ENCODE measurements at regions of chr19 and their contacts with region 1.

Region 1: DNA sequence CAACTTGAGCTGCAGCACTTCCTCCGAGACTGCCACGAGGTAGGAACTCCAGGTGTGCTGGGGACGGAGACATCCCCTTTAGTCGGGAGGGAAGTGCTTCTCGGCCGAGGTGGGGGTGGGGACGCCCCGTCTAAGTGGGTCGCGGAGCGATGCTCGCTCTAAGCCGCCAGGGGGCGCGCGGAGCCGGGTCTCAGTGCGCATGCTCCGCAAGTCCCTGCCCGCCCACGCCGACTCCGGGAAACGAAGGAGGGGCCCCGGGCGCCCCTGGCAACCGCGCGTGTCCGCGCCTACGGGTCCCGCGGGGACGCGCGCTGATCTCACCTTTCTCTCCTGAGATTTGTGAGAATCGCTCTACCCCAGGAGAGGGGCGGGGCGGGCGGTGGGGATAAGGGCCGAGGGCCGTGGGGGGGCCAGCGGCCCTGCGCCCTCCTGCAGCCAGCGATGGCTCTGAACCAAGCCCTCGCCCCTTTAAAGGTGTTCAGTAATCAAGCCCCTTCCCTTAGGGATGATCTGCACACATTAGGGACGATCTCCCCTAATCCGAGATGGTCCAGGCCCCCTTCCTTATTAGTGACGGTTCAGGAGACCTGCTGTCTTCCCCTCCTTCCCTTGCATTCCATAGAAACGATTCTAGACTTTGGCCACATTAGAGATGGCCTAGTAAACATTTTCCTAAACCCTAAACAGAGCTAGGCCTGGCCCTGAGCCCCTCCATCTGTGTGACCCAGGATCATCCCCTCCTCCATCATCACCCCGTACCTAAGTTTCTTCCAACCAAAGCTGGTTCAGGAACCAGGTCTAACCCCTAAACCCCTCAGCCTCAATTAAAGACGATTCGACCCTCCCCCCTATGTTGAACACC is 47.3 kb upstream of the SHKBP1 start:
- DNase-seq: peak; percentile 97
- H3K4me3 Mint-ChIP-seq: peak overlapping the region; percentile 73
- H3K27ac Mint-ChIP-seq: peak overlapping the region; percentile 53
- H3K4me1 Mint-ChIP-seq: peaks cover 16% of the 10 kb centered on the region
- H3K27me3 Mint-ChIP-seq: peaks cover 32% of the 10 kb centered on the region

Region 2: GRCh38 chr19:40305403-40305802 is 223.9 kb before region 1 on chr19:
- intact Hi-C with region 1: loop called (anchors 10 kb)
- DNase-seq: peak; percentile 92
- H3K4me3 Mint-ChIP-seq: no peak overlapping the region
- H3K27ac Mint-ChIP-seq: no peak overlapping the region
- H3K4me1 Mint-ChIP-seq: peaks cover 3% of the 10 kb centered on the region
- H3K27me3 Mint-ChIP-seq: peaks cover 1% of the 10 kb centered on the region

Region 3: DNA sequence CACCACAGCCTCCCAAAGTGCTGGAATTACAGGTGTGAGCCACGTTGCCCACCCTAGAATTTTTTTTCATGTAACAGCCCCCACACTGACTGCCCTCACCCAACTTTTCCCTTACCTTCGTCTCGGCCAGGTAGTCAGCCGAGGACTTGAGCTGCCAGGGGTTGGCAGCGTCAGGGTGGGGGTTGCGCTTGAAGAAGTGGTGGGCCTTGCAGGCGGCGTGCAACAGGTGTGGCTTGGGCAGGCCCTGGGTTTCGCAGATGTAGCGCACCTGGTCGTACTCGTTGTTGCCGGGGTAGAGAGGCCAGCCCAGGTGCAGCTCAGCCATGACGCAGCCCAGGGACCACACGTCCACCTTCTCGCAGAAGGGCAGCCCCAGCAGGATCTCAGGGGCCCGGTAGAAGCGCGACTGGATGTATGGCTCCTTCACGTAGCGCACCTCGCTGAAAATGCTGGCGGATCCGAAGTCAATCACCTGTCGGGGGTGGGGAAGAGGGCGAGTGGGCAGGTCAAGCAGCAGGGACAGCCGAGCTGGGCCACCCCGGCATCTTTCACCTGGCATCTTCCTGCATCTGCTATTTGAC is 145.6 kb before region 1 on chr19:
- intact Hi-C with region 1: no loop called
- DNase-seq: no peak
- H3K4me3 Mint-ChIP-seq: no peak overlapping the region
- H3K27ac Mint-ChIP-seq: no peak overlapping the region
- H3K4me1 Mint-ChIP-seq: no peaks in the 10 kb centered on the region
- H3K27me3 Mint-ChIP-seq: peaks cover 2% of the 10 kb centered on the region

Region 4: GRCh38 chr19:40425450-40426287 is 103.7 kb before region 1 on chr19 and contains the start of gene SERTAD1:
- intact Hi-C with region 1: loop called (anchors 5 kb)
- DNase-seq: peak; percentile 100
- H3K4me3 Mint-ChIP-seq: peak within 1 kb of the TSS; percentile 92
- H3K27ac Mint-ChIP-seq: peak within 1 kb of the TSS; percentile 91
- H3K4me1 Mint-ChIP-seq: peaks cover 26% of the 10 kb centered on the region
- H3K27me3 Mint-ChIP-seq: peaks cover 5% of the 10 kb centered on the region
- total RNA-seq, gene SERTAD1: 19.3 and 20.8 TPM in 2 replicates

Region 5: GRCh38 chr19:40465557-40466150 is 63.7 kb before region 1 on chr19 and contains the start of gene BLVRB:
- intact Hi-C with region 1: loop called (anchors 5 kb)
- DNase-seq: peak; percentile 100
- H3K4me3 Mint-ChIP-seq: peak within 1 kb of the TSS; percentile 96
- H3K27ac Mint-ChIP-seq: peak within 1 kb of the TSS; percentile 87
- H3K4me1 Mint-ChIP-seq: peaks cover 24% of the 10 kb centered on the region
- H3K27me3 Mint-ChIP-seq: peaks cover 23% of the 10 kb centered on the region
- total RNA-seq, gene BLVRB: 7.5 and 10.6 TPM in 2 replicates

Region 6: DNA sequence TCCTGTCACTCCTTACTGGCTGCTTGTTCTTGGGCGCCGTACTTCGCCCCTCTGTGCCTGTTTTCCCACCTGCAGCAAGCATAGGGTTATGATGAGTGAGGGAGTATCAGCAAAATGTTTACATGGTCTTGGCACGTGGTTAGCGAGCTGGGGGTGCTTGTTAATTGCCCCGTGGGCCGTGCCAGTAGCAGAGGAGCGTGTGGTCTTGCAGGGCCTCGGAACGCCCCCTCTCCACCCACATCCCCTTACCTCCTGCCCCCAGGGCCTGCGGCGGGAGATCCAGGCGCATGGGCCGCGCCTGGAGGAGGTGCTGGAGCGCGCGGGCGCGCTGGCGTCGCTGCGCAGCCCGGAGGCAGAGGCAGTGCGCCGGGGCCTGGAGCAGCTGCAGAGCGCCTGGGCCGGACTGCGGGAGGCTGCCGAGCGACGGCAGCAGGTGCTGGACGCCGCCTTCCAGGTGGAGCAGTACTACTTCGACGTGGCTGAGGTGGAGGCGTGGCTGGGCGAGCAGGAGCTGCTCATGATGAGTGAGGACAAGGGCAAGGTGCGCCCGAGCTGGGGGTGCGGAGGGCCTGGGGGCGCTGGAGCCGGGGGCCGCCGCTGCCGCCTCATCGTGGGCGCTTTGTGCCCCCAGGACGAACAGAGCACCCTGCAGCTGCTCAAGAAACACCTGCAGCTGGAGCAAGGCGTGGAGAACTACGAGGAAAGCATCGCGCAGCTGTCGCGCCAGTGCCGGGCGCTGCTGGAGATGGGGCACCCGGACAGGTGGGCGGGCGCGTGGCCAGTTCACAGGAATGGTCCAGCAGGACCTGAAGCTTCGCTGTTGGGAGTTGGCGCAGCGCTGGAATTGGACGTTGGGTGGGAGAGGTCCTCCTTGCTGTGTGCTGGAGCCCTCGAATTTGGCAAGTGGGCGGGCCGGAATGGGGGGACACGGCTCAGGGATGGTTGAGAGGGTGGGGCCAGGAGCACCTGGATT is 24.8 kb after region 1 on chr19:
- intact Hi-C with region 1: no loop called
- DNase-seq: no peak
- H3K4me3 Mint-ChIP-seq: no peak overlapping the region
- H3K27ac Mint-ChIP-seq: no peak overlapping the region
- H3K4me1 Mint-ChIP-seq: peaks cover 5% of the 10 kb centered on the region
- H3K27me3 Mint-ChIP-seq: peaks cover 44% of the 10 kb centered on the region

Region 7: GRCh38 chr19:40570313-40571004 is 41.1 kb after region 1 on chr19:
- intact Hi-C with region 1: loop called (anchors 2 kb)
- DNase-seq: peak; percentile 99
- H3K4me3 Mint-ChIP-seq: peak overlapping the region; percentile 63
- H3K27ac Mint-ChIP-seq: peak overlapping the region; percentile 60
- H3K4me1 Mint-ChIP-seq: peaks cover 9% of the 10 kb centered on the region
- H3K27me3 Mint-ChIP-seq: peaks cover 32% of the 10 kb centered on the region

Region 8: DNA sequence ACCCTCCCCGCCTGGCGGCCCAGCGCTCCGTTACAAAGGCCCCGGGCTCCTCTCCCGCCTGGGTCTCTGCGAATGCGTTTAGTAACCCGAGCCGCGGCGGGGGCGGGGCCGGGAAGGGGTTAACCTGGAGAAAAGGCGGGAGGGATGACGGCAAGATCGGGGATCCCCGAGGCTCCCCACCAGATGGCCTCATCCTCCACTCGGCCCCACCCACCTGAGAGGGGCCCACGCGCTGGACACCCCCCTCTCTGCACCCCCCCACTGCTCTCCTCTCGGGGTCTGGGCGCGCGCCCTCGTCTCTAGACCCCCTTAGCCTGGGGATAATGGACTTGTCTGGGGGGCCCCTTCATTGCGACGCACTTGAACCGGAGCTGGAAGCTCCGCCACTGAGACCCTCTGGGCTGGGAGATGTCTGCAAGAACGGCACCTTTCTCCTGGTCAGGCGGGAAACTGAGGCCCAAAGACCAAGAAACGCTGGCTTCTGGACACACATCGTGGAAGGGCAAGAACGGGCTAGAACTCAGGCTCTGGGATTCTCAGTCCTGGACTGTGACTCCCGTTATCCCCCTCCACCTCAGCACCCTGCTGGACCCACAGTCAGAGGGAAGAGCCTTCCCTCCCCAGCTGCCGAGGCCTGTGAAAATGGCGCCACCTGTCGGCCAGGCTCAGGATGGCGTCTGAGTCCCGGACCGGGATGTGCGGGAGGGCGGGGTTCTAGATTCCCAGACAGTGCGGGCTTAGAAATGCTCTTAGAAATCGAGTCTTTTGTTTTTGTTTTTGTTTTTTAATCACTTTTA is 69.0 kb after region 1 on chr19:
- intact Hi-C with region 1: loop called (anchors 2 kb)
- DNase-seq: peak; percentile 96
- H3K4me3 Mint-ChIP-seq: peak overlapping the region; percentile 55
- H3K27ac Mint-ChIP-seq: no peak overlapping the region
- H3K4me1 Mint-ChIP-seq: peaks cover 49% of the 10 kb centered on the region
- H3K27me3 Mint-ChIP-seq: peaks cover 44% of the 10 kb centered on the region

Region 9: DNA sequence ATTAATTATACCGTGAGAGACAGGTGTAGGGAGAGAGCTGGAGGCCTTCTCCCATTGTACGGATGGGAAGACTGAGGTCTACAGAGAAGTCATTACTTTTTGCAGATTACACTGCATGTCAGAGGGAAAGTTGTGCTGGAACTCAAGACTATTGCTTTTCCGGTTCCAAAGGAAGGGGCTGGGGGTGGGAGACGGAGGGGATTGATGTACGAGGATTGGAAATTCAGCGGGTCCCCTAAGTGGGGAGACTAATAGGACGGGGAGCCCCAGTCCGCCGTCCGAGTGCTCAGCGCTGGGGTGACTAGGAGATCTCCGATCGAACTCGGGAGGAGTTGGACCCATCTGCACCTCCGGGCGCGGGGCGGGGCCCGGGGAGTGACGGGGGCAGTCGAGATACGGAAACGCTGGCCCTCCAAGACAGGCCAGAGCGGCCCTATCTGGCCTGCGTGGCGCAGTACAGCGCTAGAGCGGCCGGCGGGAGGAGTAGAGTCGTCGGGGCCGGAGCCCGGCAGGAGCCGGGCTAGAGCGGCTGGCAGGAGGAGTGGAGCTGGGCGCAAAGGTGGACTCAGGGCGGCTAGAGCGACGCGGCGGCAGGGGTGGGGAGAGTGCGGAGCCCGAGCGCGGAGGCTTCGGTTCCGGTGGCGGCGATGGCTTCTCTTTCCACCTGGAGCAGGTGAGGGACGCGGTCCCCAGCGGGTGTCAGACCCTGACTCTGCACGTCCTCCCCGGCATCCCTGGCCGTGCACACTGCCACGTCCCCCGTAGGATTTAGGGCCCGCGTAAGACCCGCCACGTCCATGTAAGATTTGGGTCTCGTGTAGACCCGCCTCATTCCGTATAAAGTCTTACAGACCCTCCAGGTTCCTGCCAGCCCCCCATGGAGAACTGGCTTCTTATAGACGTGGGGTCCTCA is 1354.8 kb after region 1 on chr19:
- intact Hi-C with region 1: no loop called
- DNase-seq: peak; percentile 97
- H3K4me3 Mint-ChIP-seq: peak overlapping the region; percentile 83
- H3K27ac Mint-ChIP-seq: peak overlapping the region; percentile 94
- H3K4me1 Mint-ChIP-seq: peaks cover 50% of the 10 kb centered on the region
- H3K27me3 Mint-ChIP-seq: no peaks in the 10 kb centered on the region

Measured in activated CD4-positive, alpha-beta T cell treated with anti-CD3 and anti-CD28 coated beads, Interleukin-2, amount 10 ng/mL, durations not matched to agents 24 days and 14 days (primary cell).